ENCODE measurements at regions of chr15 and their contacts with region 1.

Region 1: GRCh38 chr15:57706405-57707209 is at the start of gene POLR2M:
- DNase-seq: peak; percentile 96
- ATAC-seq: peak; percentile 94
- H3K4me3 Mint-ChIP-seq: peak within 1 kb of the TSS; percentile 90
- H3K27ac Mint-ChIP-seq: peak within 1 kb of the TSS; percentile 95
- H3K4me1 Mint-ChIP-seq: peaks cover 70% of the 10 kb centered on the region
- H3K27me3 Mint-ChIP-seq: no peaks in the 10 kb centered on the region
- total RNA-seq, gene POLR2M: 76.1 to 87.2 TPM

Region 2: GRCh38 chr15:57561041-57561711 is 145.4 kb before region 1 on chr15:
- CTCF ChIA-PET with region 1: interaction called, 4 read pairs
- POLR2A ChIA-PET with region 1: interaction called, 4 read pairs
- intact Hi-C with region 1: loop called (anchors 1 kb)
- DNase-seq: peak; percentile 74
- ATAC-seq: peak; percentile 83
- H3K4me3 Mint-ChIP-seq: peak overlapping the region; percentile 17
- H3K27ac Mint-ChIP-seq: peak overlapping the region; percentile 89
- H3K4me1 Mint-ChIP-seq: peaks cover 37% of the 10 kb centered on the region
- H3K27me3 Mint-ChIP-seq: no peaks in the 10 kb centered on the region

Region 3: DNA sequence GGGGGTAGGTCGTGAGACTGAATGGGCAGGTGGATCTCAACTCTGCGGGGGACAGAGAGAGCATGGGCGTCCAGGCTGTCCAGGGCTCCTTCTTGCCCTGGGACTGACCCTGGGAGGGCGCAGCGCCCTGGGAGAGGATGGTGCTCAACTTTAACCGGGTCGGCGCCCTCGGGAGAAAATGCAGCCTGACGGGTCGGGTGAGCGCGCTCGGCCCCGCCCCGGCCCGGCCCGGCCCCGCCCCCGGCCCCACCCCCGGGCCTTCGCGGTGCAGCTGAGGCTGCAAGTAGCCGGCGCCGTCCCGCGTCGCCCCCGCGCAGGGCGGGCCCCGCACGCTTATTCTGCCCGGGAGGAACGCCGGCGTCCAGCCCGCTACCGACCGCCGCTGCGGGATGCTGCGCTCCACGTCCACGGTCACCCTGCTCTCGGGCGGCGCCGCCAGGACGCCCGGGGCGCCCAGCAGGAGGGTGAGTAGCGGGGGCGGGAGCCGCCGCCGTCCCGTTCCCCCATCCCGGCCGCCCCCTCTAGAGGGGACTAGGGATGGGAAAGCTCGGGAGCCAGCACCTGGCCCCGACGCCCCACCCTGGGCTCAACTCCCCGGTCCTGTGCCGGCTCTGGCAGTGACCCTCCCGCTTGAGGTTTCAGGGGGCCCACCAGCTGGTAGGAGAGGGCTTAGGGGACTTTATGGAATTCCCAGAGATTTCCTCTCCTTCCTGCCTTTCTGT is 114.8 kb before region 1 on chr15 and contains the start of gene MYZAP:
- CTCF ChIA-PET with region 1: interaction called, 3 read pairs
- POLR2A ChIA-PET with region 1: no interaction called
- intact Hi-C with region 1: loop called in 1 of 2 experiments (anchors 2 kb)
- DNase-seq: peak; percentile 64
- ATAC-seq: peak; percentile 72
- H3K4me3 Mint-ChIP-seq: peak within 1 kb of the TSS; percentile 57
- H3K27ac Mint-ChIP-seq: no peak within 1 kb of the TSS
- H3K4me1 Mint-ChIP-seq: peaks cover 29% of the 10 kb centered on the region
- H3K27me3 Mint-ChIP-seq: peaks cover 21% of the 10 kb centered on the region
- total RNA-seq, gene MYZAP: 0.11 TPM

Region 4: GRCh38 chr15:57732526-57733331 is 26.1 kb after region 1 on chr15:
- CTCF ChIA-PET with region 1: interaction called, 15 read pairs
- POLR2A ChIA-PET with region 1: no interaction called
- intact Hi-C with region 1: no loop called
- DNase-seq: peak; percentile 69
- ATAC-seq: peak; percentile 36
- H3K4me3 Mint-ChIP-seq: no peak overlapping the region
- H3K27ac Mint-ChIP-seq: no peak overlapping the region
- H3K4me1 Mint-ChIP-seq: peaks cover 9% of the 10 kb centered on the region
- H3K27me3 Mint-ChIP-seq: no peaks in the 10 kb centered on the region

Region 5: DNA sequence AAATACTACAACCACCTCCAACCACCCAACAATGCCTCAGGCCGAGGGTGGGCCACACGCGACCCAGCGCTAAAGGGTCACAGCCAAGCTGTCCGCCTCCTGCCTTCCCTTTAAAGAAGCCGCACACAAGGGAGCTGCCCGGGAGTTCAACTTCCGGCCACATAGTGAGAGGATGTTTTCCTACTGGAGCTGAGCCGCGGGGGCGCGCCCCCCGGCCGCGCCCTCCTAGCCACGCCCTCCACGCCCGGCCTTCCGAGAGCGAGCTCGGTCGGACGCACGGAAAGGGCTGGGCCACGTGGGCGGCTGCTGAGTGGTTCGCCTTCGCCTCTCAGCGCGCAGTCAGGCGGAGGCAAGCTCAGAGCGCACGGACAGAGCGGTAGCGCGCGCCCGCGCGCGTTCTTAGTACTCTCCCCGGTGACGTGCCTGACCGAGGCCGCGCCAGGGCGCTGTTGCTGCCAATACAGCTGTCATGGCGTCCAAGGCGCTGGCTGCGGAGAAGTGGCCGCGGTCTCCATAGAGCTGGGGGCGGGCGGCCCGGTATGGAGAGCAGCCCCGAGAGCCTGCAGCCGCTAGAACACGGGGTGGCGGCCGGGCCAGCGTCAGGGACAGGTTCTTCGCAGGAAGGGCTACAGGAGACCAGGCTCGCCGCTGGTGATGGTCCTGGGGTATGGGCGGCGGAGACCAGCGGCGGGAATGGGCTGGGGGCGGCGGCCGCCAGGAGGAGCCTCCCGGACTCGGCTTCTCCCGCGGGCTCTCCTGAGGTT is 1064.4 kb after region 1 on chr15 and contains the start of gene MINDY2:
- CTCF ChIA-PET with region 1: no interaction called
- POLR2A ChIA-PET with region 1: no interaction called
- intact Hi-C with region 1: loop called in 1 of 2 experiments (anchors 5 kb)
- DNase-seq: peak; percentile 97
- ATAC-seq: peak; percentile 96
- H3K4me3 Mint-ChIP-seq: no peak within 1 kb of the TSS
- H3K27ac Mint-ChIP-seq: peak within 1 kb of the TSS; percentile 88
- H3K4me1 Mint-ChIP-seq: peaks cover 12% of the 10 kb centered on the region
- H3K27me3 Mint-ChIP-seq: no peaks in the 10 kb centered on the region
- total RNA-seq, gene MINDY2: 8.2 to 9.2 TPM

Region 6: GRCh38 chr15:59656897-59657634 is 1950.5 kb after region 1 on chr15 and contains the start of gene GTF2A2:
- CTCF ChIA-PET with region 1: no interaction called
- POLR2A ChIA-PET with region 1: no interaction called
- intact Hi-C with region 1: loop called in 1 of 2 experiments (anchors 10 kb)
- DNase-seq: peak; percentile 97
- ATAC-seq: peak; percentile 100
- H3K4me3 Mint-ChIP-seq: no peak within 1 kb of the TSS
- H3K27ac Mint-ChIP-seq: peak within 1 kb of the TSS; percentile 89
- H3K4me1 Mint-ChIP-seq: peaks cover 10% of the 10 kb centered on the region
- H3K27me3 Mint-ChIP-seq: no peaks in the 10 kb centered on the region
- total RNA-seq, gene GTF2A2: 167 to 198 TPM

Measured in activated CD4-positive, alpha-beta T cell treated with anti-CD3 and anti-CD28 coated beads for 36 hours (primary cell).